ENCODE measurements at regions of chr11 and their contacts with region 1.

Region 1: DNA sequence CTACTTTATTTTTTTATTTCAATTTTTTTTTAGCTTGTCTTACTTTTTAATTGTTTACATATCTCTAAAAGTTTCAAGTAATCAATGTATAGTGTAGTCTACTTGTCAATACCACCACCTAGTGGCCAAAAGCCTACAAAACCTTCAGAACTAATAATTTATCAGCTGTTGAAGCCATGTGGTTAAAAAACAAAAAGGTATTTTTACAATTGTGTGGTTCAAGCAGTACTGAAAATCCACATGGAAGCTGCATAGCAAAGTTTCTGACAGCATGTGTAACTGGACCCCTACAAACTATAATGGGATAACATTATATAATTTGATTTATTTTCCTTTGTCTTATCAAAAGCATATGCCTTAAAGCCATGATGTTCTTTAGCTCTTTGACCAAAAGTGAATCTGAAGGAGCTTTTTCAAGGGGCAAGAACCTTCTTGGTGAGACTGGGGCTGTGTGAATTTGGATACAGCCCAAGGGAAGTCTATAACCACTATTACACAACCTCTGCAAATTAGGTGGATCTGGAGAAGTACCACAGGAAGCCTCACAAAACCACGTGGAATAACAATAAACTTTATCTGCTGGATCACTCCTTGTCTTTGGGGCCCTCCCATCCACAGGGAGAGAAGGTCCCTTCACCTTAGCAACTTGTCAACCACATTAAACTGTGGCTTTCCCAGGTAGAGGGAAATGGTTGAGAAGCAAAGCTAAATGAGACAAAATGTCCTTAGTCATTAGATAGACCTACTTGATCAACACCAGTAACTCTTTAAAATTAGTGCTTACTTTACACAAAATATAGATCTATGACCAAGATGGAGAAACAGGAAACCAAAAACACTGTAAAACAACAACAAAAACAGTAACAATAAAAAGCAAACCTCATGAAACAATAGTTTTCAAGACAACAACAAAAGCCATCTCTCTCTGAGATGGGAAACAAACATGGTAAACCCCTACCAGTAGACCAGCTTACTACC is 9.9 kb downstream of the NARS2 start:
- DNase-seq: peak; percentile 33 to 73 (median 38)
- ATAC-seq: peak; percentile 88
- H3K4me3 ChIP-seq: no peak overlapping the region
- H3K27ac ChIP-seq: peak overlapping the region; percentile 23; the same call in 1 of the 3 replicates
- H3K4me1 ChIP-seq: peaks cover 0 to 3% of the 10 kb centered on the region in 2 experiments; a peak in 1 of 5 replicates
- H3K27me3 ChIP-seq: no peaks in the 10 kb centered on the region
- CTCF ChIP-seq: peak; percentile 40 to 83 (median 53); a peak in 4 of 6 replicates
- EP300 ChIP-seq: no peak
- POLR2A ChIP-seq: no peak
- RAD21 ChIP-seq: peak; percentile 78 to 87

Region 2: DNA sequence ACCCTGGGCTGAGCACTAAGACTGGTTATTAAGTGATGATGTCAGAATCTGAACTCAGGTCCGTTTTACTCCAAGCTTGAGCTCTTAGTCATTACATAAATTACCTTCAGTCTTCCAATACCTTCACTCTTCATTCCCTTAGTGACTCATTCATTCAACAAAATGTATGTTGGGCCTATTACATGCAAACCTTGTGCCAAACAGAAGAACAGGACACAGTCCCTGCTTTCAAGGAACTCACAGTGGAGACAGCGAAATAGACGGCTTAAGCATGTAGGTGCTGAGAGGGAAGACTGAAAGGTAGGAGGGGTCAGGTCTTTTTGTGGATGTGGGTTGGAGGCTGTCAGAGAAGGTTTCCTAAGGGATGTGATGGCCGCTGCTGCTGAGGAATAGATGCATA is 545.0 kb before region 1 on chr11:
- CTCF ChIA-PET with region 1: no interaction called
- POLR2A ChIA-PET with region 1: no interaction called
- in situ Hi-C with region 1: no loop called
- intact Hi-C with region 1: loop called (anchors 10 kb)
- DNase-seq: no peak
- ATAC-seq: no peak
- H3K4me3 ChIP-seq: no peak overlapping the region
- H3K27ac ChIP-seq: no peak overlapping the region
- H3K4me1 ChIP-seq: peaks cover 8 to 10% of the 10 kb centered on the region in 2 experiments; a peak in 4 of 5 replicates
- H3K27me3 ChIP-seq: no peaks in the 10 kb centered on the region
- CTCF ChIP-seq: no peak
- EP300 ChIP-seq: no peak
- POLR2A ChIP-seq: no peak
- RAD21 ChIP-seq: no peak

Region 3: GRCh38 chr11:78149646-78150045 is 415.1 kb before region 1 on chr11:
- CTCF ChIA-PET with region 1: interaction called, 3 read pairs
- POLR2A ChIA-PET with region 1: no interaction called
- in situ Hi-C with region 1: no loop called
- intact Hi-C with region 1: loop called (anchors 5 kb)
- DNase-seq: no peak
- ATAC-seq: peak; percentile 50; the same call in 2 of the 3 replicates
- H3K4me3 ChIP-seq: no peak overlapping the region
- H3K27ac ChIP-seq: no peak overlapping the region
- H3K4me1 ChIP-seq: no peaks in the 10 kb centered on the region
- H3K27me3 ChIP-seq: no peaks in the 10 kb centered on the region
- CTCF ChIP-seq: peak in 1 of 3 experiments; percentile 38; a peak in 2 of 6 replicates
- EP300 ChIP-seq: no peak
- POLR2A ChIP-seq: no peak
- RAD21 ChIP-seq: peak in 1 of 2 experiments; percentile 52; a peak in 2 of 4 replicates

Region 4: DNA sequence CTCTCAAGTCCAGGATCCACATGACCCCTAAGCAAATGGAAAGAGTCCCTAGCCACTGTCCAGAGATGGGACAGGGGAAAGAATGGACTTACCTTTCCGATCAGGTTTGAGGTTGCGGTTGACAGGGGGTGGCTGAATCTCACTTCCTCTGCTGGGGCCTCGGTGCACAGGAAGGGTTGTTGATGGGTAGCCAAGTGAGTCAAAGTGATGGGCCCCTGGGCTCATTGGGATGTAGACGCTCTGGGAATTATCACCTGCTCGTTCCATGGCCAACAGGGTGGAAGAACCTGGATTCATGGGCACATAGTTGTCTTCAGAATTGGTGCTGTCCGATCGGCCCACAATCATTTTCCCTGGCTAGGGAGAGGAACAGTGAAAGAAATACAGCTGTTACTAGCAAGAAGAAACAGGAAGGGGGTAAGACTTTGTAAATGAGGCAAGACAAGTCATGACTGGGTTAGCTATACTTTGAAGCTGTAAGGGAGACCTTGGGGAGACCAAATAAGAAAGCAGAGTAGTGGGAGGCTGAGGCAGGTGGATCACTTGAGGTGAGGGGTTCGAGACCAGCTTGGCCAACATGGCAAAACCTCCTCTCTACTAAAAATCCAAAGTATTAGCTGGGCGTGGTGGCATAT is 341.3 kb before region 1 on chr11:
- CTCF ChIA-PET with region 1: interaction called, 30 read pairs
- POLR2A ChIA-PET with region 1: interaction called, 3 read pairs
- in situ Hi-C with region 1: loop called (anchors 5 kb)
- intact Hi-C with region 1: loop called (anchors 1 kb)
- DNase-seq: no peak
- ATAC-seq: no peak
- H3K4me3 ChIP-seq: no peak overlapping the region
- H3K27ac ChIP-seq: no peak overlapping the region
- H3K4me1 ChIP-seq: no peaks in the 10 kb centered on the region; a peak in 1 of 5 replicates
- H3K27me3 ChIP-seq: no peaks in the 10 kb centered on the region
- CTCF ChIP-seq: no peak
- EP300 ChIP-seq: no peak
- POLR2A ChIP-seq: no peak
- RAD21 ChIP-seq: no peak

Region 5: DNA sequence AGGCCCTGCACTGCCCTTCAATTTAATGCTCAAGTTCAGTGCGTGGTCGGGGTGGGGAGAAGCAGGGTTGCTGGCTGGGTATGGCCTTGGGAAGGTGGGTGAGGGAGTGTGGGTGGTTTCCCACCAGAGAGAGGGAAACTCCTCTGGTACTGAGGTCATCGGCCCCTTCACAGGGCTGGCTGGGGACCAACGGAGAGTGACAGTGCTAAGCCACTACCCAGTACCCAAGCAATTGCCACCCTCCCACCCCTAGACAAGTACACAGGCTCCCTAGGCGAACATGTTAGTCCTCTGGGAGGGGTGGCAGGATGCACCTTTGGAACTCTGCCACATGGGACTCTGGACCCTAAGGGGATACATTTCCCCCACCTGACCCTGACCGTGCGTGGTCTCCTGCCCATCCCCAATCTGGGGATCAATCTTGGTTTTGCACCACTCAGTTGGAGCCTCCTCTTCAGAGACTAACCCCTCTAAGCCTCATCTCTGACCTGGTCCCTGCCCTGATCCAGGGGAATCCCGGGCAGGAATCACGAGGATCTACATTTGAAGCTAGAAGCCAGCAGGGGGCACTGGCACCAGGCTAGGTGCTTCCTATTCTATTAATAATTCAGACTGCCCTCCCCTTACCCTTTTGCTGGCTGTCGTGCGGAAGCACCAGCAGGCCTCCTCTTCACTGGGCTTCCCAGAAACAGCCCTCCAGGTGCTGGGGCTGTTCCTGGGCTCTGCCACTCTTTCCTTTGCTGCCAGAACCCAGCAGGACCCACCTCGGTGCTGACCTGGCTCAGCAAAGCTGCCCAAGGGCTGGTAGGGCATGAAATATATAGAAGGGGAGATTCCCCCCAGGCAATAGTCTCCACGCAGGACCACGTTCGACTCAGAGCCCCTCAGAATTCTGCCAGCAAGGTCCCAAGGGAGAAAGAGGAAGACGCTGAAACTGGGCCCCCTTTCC is 498.3 kb after region 1 on chr11:
- CTCF ChIA-PET with region 1: no interaction called
- POLR2A ChIA-PET with region 1: no interaction called
- in situ Hi-C with region 1: no loop called
- intact Hi-C with region 1: no loop called
- DNase-seq: peak; percentile 11 to 18 (median 18)
- ATAC-seq: peak; percentile 67
- H3K4me3 ChIP-seq: no peak overlapping the region
- H3K27ac ChIP-seq: no peak overlapping the region
- H3K4me1 ChIP-seq: no peaks in the 10 kb centered on the region
- H3K27me3 ChIP-seq: peaks cover 0 to 8% of the 10 kb centered on the region in 2 experiments; a peak in 2 of 5 replicates
- CTCF ChIP-seq: peak in 2 of 3 experiments; percentile 42 to 50; a peak in 4 of 6 replicates
- EP300 ChIP-seq: no peak
- POLR2A ChIP-seq: no peak
- RAD21 ChIP-seq: peak in 1 of 2 experiments; percentile 10; a peak in 1 of 4 replicates

Measured in K562 (cell line).